ENCODE measurements at regions of chr15 and their contacts with region 1.

Region 1: DNA sequence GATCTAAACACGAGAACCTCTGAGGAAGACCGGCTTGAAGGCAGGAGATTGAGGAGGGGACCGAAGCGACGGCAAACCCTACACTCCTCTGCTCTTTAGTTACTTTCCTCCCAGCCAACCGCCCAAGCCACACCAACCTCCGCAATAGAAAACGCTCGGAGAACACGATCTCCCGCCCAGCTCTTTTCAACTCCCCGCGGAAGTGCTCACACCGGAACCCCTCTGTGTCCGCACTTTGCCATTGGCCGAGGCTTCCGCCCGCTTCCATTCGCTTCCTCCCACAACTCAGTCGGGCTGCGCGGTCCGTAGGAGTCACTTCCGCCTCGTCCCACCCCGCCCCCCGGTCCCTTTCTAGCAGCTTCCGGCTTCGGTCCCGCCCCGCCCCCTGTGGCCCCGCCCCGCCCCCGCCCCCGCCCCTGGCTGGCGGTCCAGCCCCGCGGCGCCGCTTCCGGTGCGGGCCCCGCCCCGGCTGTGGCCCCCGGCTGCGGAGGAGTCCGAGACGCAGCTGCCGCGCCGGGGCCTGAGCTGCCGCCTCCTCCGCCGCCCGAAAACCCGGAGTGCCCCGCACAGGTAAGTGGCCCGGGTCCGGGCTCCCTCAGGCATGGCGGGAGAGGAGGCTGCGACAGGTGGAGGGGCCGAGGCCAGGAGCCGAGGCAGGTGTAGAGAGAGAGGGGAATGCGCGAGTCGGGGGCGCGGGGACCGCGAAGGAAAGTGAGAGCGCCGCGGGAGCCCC is at the start of gene ARID3B:
- DNase-seq: peak; percentile 96
- ATAC-seq: peak; percentile 90
- H3K4me3 ChIP-seq: peak within 1 kb of the TSS; percentile 79 to 100 (median 93)
- H3K4me3 Mint-ChIP-seq: peak within 1 kb of the TSS; percentile 99
- H3K27ac ChIP-seq: peak within 1 kb of the TSS; percentile 77
- H3K27ac Mint-ChIP-seq: peak within 1 kb of the TSS; percentile 97
- H3K4me1 ChIP-seq: peaks cover 26 to 41% of the 10 kb centered on the region in 2 donors
- H3K4me1 Mint-ChIP-seq: peaks cover 46% of the 10 kb centered on the region
- H3K27me3 ChIP-seq: no peaks in the 10 kb centered on the region
- H3K27me3 Mint-ChIP-seq: no peaks in the 10 kb centered on the region
- CTCF ChIP-seq: no peak
- total RNA-seq, gene ARID3B: 30.9 and 31.0 TPM in 2 replicates

Region 2: DNA sequence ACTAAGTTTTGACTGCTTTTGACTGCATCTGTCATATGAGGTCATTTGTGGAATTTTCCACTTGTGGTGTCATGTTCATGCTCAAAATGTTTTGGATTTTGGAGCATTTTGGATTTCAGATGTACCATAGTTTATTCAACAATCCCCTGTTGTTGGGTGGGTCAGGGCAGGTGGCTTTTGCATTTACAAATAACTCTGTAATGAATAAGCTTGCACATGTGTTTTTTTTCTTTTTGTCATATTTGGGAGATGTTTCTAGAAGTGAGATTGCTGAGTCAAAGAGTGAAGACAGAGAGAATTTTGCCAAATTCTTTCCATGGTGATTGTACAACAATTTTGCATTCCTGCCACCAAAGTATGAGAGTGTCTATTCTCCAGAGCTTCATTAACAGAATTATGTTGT is 1694.9 kb before region 1 on chr15:
- CTCF ChIA-PET with region 1: no interaction called
- POLR2A ChIA-PET with region 1: no interaction called
- intact Hi-C with region 1: no loop called
- DNase-seq: no peak
- ATAC-seq: no peak
- H3K4me3 ChIP-seq: no peak overlapping the region
- H3K4me3 Mint-ChIP-seq: no peak overlapping the region
- H3K27ac ChIP-seq: no peak overlapping the region
- H3K27ac Mint-ChIP-seq: no peak overlapping the region
- H3K4me1 ChIP-seq: no peaks in the 10 kb centered on the region
- H3K4me1 Mint-ChIP-seq: no peaks in the 10 kb centered on the region
- H3K27me3 ChIP-seq: peaks cover 0 to 11% (median 5%) of the 10 kb centered on the region in 4 experiments
- H3K27me3 Mint-ChIP-seq: peaks cover 47% of the 10 kb centered on the region
- CTCF ChIP-seq: no peak

Region 3: DNA sequence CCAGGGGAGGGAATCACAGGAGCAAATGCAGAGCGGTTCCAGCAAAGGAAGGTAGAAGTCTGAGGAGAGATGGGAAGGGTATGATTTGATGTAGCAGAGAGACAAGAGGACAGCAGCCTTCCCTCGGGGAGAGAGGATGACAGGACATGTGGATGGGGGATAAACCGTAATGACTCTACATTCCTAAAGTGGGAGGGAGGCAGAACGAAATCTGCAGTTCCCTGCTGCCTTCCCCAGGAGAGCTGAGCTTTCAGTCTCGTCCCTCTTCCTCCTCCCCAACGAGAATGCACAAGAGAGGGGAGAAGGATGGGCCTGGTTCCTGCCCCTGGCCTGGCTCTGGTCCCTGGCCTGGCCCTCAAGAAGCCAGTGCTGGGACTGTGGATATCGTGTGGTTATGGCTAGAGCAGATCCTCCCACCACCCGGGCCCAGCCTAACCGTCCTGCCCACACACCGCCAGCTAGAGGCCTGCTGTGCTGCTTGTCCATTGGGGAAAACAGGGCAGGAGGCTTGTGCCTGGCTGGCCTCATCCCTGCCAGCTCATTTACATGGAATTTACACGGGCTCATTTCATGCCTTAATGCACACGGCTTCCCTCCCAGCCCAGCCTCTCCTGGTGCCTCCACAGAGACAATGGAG is 133.8 kb before region 1 on chr15:
- CTCF ChIA-PET with region 1: no interaction called
- POLR2A ChIA-PET with region 1: no interaction called
- intact Hi-C with region 1: no loop called
- DNase-seq: no peak
- ATAC-seq: no peak
- H3K4me3 ChIP-seq: no peak overlapping the region
- H3K4me3 Mint-ChIP-seq: no peak overlapping the region
- H3K27ac ChIP-seq: peak overlapping the region in 1 of 2 donors; percentile 11
- H3K27ac Mint-ChIP-seq: peak overlapping the region; percentile 59
- H3K4me1 ChIP-seq: peaks cover 38 to 59% of the 10 kb centered on the region in 2 donors
- H3K4me1 Mint-ChIP-seq: peaks cover 61% of the 10 kb centered on the region
- H3K27me3 ChIP-seq: no peaks in the 10 kb centered on the region
- H3K27me3 Mint-ChIP-seq: no peaks in the 10 kb centered on the region
- CTCF ChIP-seq: no peak

Region 4: GRCh38 chr15:74489518-74490338 is 51.2 kb before region 1 on chr15:
- CTCF ChIA-PET with region 1: interaction called, 4 read pairs
- POLR2A ChIA-PET with region 1: no interaction called
- intact Hi-C with region 1: loop called (anchors 5 kb)
- DNase-seq: peak; percentile 82
- ATAC-seq: peak; percentile 96
- H3K4me3 ChIP-seq: no peak overlapping the region
- H3K4me3 Mint-ChIP-seq: peak overlapping the region; percentile 13
- H3K27ac ChIP-seq: no peak overlapping the region
- H3K27ac Mint-ChIP-seq: no peak overlapping the region
- H3K4me1 ChIP-seq: peaks cover 10% of the 10 kb centered on the region in 2 donors
- H3K4me1 Mint-ChIP-seq: peaks cover 11% of the 10 kb centered on the region
- H3K27me3 ChIP-seq: no peaks in the 10 kb centered on the region
- H3K27me3 Mint-ChIP-seq: no peaks in the 10 kb centered on the region
- CTCF ChIP-seq: peak; percentile 78

Region 5: GRCh38 chr15:74525946-74526345 is 15.0 kb before region 1 on chr15:
- CTCF ChIA-PET with region 1: no interaction called
- POLR2A ChIA-PET with region 1: no interaction called
- intact Hi-C with region 1: no loop called
- DNase-seq: no peak
- ATAC-seq: no peak
- H3K4me3 ChIP-seq: no peak overlapping the region
- H3K4me3 Mint-ChIP-seq: no peak overlapping the region
- H3K27ac ChIP-seq: no peak overlapping the region
- H3K27ac Mint-ChIP-seq: no peak overlapping the region
- H3K4me1 ChIP-seq: no peaks in the 10 kb centered on the region
- H3K4me1 Mint-ChIP-seq: no peaks in the 10 kb centered on the region
- H3K27me3 ChIP-seq: no peaks in the 10 kb centered on the region
- H3K27me3 Mint-ChIP-seq: no peaks in the 10 kb centered on the region
- CTCF ChIP-seq: no peak

Region 6: GRCh38 chr15:74615508-74616365 is 74.8 kb after region 1 on chr15 and contains the start of gene CLK3:
- CTCF ChIA-PET with region 1: interaction called, 8 read pairs
- POLR2A ChIA-PET with region 1: interaction called, 12 read pairs
- intact Hi-C with region 1: no loop called
- DNase-seq: peak; percentile 96
- ATAC-seq: peak; percentile 80
- H3K4me3 ChIP-seq: peak within 1 kb of the TSS; percentile 50 to 100 (median 100)
- H3K4me3 Mint-ChIP-seq: peak within 1 kb of the TSS; percentile 92
- H3K27ac ChIP-seq: peak within 1 kb of the TSS; percentile 99
- H3K27ac Mint-ChIP-seq: peak within 1 kb of the TSS; percentile 97
- H3K4me1 ChIP-seq: peaks cover 18 to 39% of the 10 kb centered on the region in 2 donors
- H3K4me1 Mint-ChIP-seq: peaks cover 37% of the 10 kb centered on the region
- H3K27me3 ChIP-seq: no peaks in the 10 kb centered on the region
- H3K27me3 Mint-ChIP-seq: no peaks in the 10 kb centered on the region
- CTCF ChIP-seq: no peak
- total RNA-seq, gene CLK3: 164 and 176 TPM in 2 replicates

Region 7: GRCh38 chr15:74787251-74788041 is 246.5 kb after region 1 on chr15:
- CTCF ChIA-PET with region 1: no interaction called
- POLR2A ChIA-PET with region 1: interaction called, 10 read pairs
- intact Hi-C with region 1: loop called (anchors 5 kb)
- DNase-seq: peak; percentile 98
- ATAC-seq: peak; percentile 57
- H3K4me3 ChIP-seq: peak overlapping the region; percentile 67 to 99 (median 86)
- H3K4me3 Mint-ChIP-seq: peak overlapping the region; percentile 93
- H3K27ac ChIP-seq: peak overlapping the region; percentile 90 to 93
- H3K27ac Mint-ChIP-seq: peak overlapping the region; percentile 99
- H3K4me1 ChIP-seq: peaks cover 61 to 91% of the 10 kb centered on the region in 2 donors
- H3K4me1 Mint-ChIP-seq: peaks cover 94% of the 10 kb centered on the region
- H3K27me3 ChIP-seq: no peaks in the 10 kb centered on the region
- H3K27me3 Mint-ChIP-seq: no peaks in the 10 kb centered on the region
- CTCF ChIP-seq: peak; percentile 75